H1 (cell line): ENCODE measurements at regions of chr6 and their contacts with region 1.

Region 1: DNA sequence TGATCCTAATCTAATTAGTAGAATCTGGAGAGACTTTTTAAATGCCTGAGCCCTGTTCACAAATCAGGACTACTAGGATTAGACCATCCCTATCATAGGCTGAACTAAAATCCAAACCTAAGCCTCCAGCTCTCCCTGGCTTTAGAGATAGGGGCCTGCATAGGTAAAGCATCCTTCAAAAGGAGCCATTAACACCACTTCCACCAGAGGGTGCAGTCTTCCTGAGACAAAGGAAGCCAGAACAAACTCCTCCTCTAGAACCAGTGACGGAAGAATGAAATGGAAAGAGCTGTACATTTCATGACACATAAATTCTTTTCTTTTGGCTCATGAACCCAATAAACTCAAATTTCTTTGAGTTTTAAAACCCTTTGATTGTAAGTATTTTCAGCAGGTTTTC is 291.2 kb upstream of the ADGRB3 start:
- DNase-seq: peak; percentile 13 to 58
- H3K4me3 ChIP-seq: no peak overlapping the region
- H3K27ac ChIP-seq: no peak overlapping the region
- H3K4me1 ChIP-seq: no peaks in the 10 kb centered on the region
- H3K27me3 ChIP-seq: no peaks in the 10 kb centered on the region
- CTCF ChIP-seq: peak in 2 of 3 experiments; percentile 88 to 94; a peak in 3 of 4 replicates
- EP300 ChIP-seq: no peak
- POLR2A ChIP-seq: no peak
- RAD21 ChIP-seq: peak; percentile 85 to 93

Region 2: GRCh38 chr6:68196645-68197044 is 147.3 kb before region 1 on chr6:
- CTCF ChIA-PET with region 1: no interaction called
- POLR2A ChIA-PET with region 1: no interaction called
- DNase-seq: no peak
- H3K4me3 ChIP-seq: no peak overlapping the region
- H3K27ac ChIP-seq: no peak overlapping the region
- H3K4me1 ChIP-seq: no peaks in the 10 kb centered on the region
- H3K27me3 ChIP-seq: no peaks in the 10 kb centered on the region
- CTCF ChIP-seq: peak in 2 of 3 experiments; percentile 40 to 42; a peak in 2 of 4 replicates
- EP300 ChIP-seq: no peak
- POLR2A ChIP-seq: no peak
- RAD21 ChIP-seq: peak; percentile 74 to 75

Region 3: GRCh38 chr6:68364271-68364805 is 20.4 kb after region 1 on chr6:
- CTCF ChIA-PET with region 1: interaction called, 10 read pairs
- POLR2A ChIA-PET with region 1: no interaction called
- DNase-seq: no peak
- H3K4me3 ChIP-seq: no peak overlapping the region
- H3K27ac ChIP-seq: no peak overlapping the region
- H3K4me1 ChIP-seq: no peaks in the 10 kb centered on the region
- H3K27me3 ChIP-seq: no peaks in the 10 kb centered on the region
- CTCF ChIP-seq: no peak
- EP300 ChIP-seq: no peak
- POLR2A ChIP-seq: no peak
- RAD21 ChIP-seq: no peak

Region 4: GRCh38 chr6:68468244-68468884 is 124.5 kb after region 1 on chr6:
- CTCF ChIA-PET with region 1: interaction called, 34 read pairs
- POLR2A ChIA-PET with region 1: no interaction called
- DNase-seq: peak; percentile 5 to 55
- H3K4me3 ChIP-seq: no peak overlapping the region
- H3K27ac ChIP-seq: no peak overlapping the region
- H3K4me1 ChIP-seq: no peaks in the 10 kb centered on the region
- H3K27me3 ChIP-seq: no peaks in the 10 kb centered on the region
- CTCF ChIP-seq: peak; percentile 30 to 65 (median 58)
- EP300 ChIP-seq: no peak
- POLR2A ChIP-seq: no peak
- RAD21 ChIP-seq: peak; percentile 71 to 73

Region 5: DNA sequence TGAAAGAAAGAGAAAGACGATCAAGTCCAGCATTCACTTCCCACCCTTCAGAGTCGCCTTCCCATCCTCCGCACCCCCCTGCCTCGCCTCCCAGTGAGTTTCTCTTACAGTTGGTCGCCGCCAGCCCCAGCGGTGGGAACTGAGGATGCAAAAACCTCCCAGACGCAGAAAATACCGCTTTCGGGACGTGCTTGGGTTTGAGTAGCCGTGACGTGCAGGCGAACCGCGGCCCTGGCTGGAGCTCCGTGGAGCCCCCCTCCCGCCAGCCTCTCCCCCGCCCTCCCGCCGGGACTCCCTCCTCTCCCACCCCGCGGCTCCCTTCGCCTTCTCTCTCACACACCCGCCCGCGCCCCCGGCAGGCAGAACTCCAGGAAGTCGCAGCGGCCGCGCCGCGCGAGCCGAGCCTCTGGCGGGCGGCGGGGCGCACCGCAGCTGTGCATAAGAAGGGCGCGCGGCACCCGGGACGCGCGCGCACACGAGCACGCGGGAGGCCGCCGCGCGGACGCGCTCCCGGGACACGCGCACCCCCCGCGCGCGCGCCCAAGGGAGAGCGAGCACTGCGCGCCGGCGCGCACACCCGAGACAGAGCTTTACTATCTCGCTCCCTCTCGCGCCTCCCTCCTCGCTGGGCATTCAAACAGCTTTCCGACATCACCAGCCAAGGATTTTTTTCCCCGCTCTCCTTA is 291.0 kb after region 1 on chr6 and contains the start of gene ADGRB3:
- CTCF ChIA-PET with region 1: interaction called, 17 read pairs
- POLR2A ChIA-PET with region 1: no interaction called
- DNase-seq: peak in 1 of 2 experiments; percentile 64
- H3K4me3 ChIP-seq: peak within 1 kb of the TSS; percentile 70 to 97 (median 83)
- H3K27ac ChIP-seq: no peak within 1 kb of the TSS
- H3K4me1 ChIP-seq: peaks cover 0 to 9% (median 5%) of the 10 kb centered on the region in 4 experiments; a peak in 5 of 7 replicates
- H3K27me3 ChIP-seq: peaks cover 0 to 25% (median 13%) of the 10 kb centered on the region in 4 experiments; a peak in 6 of 7 replicates
- CTCF ChIP-seq: no peak
- EP300 ChIP-seq: no peak
- POLR2A ChIP-seq: no peak
- RAD21 ChIP-seq: no peak
- total RNA-seq, gene ADGRB3: 0.94 and 1.2 TPM in 2 replicates

Region 6: GRCh38 chr6:68778356-68779020 is 434.6 kb after region 1 on chr6:
- CTCF ChIA-PET with region 1: interaction called, 17 read pairs
- POLR2A ChIA-PET with region 1: no interaction called
- DNase-seq: peak; percentile 7 to 50
- H3K4me3 ChIP-seq: no peak overlapping the region
- H3K27ac ChIP-seq: no peak overlapping the region
- H3K4me1 ChIP-seq: no peaks in the 10 kb centered on the region
- H3K27me3 ChIP-seq: no peaks in the 10 kb centered on the region
- CTCF ChIP-seq: peak; percentile 35 to 86 (median 86)
- EP300 ChIP-seq: no peak
- POLR2A ChIP-seq: no peak
- RAD21 ChIP-seq: peak; percentile 94 to 96